ENCODE measurements at regions of chr3 and their contacts with region 1.

Region 1: GRCh38 chr3:193572426-193572908 is 17.8 kb upstream of the ATP13A4 start:
- DNase-seq: peak in 2 of 3 donors; percentile 35 to 68
- ATAC-seq: peak; percentile 92 to 96 (median 94)
- H3K4me3 ChIP-seq: no peak overlapping the region
- H3K27ac ChIP-seq: no peak overlapping the region
- H3K4me1 ChIP-seq: no peaks in the 10 kb centered on the region
- H3K27me3 ChIP-seq: no peaks in the 10 kb centered on the region
- CTCF ChIP-seq: peak; percentile 80 to 84 (median 80)
- POLR2A ChIP-seq: no peak

Region 2: DNA sequence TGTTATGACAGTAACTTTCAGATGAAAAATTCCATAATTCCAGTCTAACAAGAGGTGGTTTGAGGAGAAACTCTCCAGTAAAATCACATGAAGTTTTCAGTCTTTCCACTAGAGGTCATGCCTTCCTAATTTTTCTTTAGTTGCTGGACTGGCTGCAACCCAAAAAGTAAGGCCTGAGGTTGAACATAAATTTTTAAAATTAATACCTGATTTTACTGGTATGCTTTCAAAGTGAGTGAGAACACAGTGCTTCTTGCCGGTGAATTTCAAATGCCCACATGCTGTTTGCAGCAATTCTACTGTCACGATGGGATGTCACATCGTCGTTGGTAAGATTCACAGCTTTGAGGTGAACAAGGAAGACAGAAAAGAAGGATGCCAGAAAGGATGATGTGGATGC is 756.1 kb before region 1 on chr3:
- intact Hi-C with region 1: loop called in 1 of 2 experiments (anchors 10 kb)
- DNase-seq: no peak
- ATAC-seq: peak; percentile 64 to 72 (median 69)
- H3K4me3 ChIP-seq: no peak overlapping the region
- H3K27ac ChIP-seq: no peak overlapping the region
- H3K4me1 ChIP-seq: no peaks in the 10 kb centered on the region
- H3K27me3 ChIP-seq: no peaks in the 10 kb centered on the region
- CTCF ChIP-seq: peak; percentile 60 to 87 (median 68)
- POLR2A ChIP-seq: no peak

Region 3: DNA sequence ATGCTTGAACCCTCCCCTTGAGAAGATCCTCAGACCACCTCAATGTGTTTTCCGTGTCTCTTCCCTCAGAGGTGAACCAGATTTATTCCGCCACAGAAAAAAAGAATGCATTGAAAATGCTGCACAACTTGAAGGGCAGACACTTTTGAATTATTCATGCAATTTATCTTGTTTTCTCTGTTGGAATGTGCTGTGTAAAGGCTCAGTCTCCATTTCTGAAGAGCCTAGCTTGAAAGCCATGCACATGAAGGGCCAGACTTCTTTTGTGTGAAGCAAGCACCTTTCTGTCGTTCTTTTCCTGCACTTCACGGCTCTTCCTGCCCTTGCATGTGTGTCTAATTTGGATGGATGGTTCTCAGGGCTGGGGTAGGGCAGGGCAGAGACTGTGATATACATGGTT is 114.9 kb before region 1 on chr3:
- intact Hi-C with region 1: loop called (anchors 5 to 10 kb)
- DNase-seq: no peak
- ATAC-seq: no peak
- H3K4me3 ChIP-seq: no peak overlapping the region
- H3K27ac ChIP-seq: no peak overlapping the region
- H3K4me1 ChIP-seq: peaks cover 0 to 4% (median 0%) of the 10 kb centered on the region in 4 donors
- H3K27me3 ChIP-seq: peaks cover 0 to 3% of the 10 kb centered on the region in 2 donors
- CTCF ChIP-seq: no peak
- POLR2A ChIP-seq: no peak

Region 4: GRCh38 chr3:193465992-193466608 is 106.4 kb before region 1 on chr3:
- intact Hi-C with region 1: loop called in 1 of 2 experiments (anchors 10 kb)
- DNase-seq: no peak
- ATAC-seq: peak in 3 of 4 donors; percentile 33 to 61 (median 56)
- H3K4me3 ChIP-seq: no peak overlapping the region
- H3K27ac ChIP-seq: no peak overlapping the region
- H3K4me1 ChIP-seq: peaks cover 0 to 4% (median 0%) of the 10 kb centered on the region in 4 donors
- H3K27me3 ChIP-seq: peaks cover 0 to under 1% of the 10 kb centered on the region in 2 donors
- CTCF ChIP-seq: no peak
- POLR2A ChIP-seq: no peak

Region 5: DNA sequence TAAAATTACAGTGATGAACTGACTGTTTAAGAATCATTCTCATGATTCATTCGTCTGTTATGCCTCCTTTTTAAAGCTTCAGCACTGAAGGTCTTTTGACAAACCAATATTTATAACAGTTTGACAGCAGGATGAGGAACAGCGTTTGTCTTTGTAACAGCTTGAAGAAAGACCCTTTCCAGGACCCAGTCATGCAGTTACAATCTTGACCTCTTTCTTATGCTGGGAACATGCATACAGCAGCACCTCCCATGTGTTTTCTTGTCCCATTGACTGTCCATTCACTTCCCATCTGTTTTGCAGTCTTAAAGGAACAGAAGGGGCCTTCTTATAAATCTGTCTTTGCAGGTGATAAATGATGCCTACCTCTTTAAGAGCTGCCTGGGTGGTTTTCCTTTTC is 107.8 kb after region 1 on chr3:
- intact Hi-C with region 1: no loop called
- DNase-seq: no peak
- ATAC-seq: no peak
- H3K4me3 ChIP-seq: no peak overlapping the region
- H3K27ac ChIP-seq: no peak overlapping the region
- H3K4me1 ChIP-seq: no peaks in the 10 kb centered on the region
- H3K27me3 ChIP-seq: no peaks in the 10 kb centered on the region
- CTCF ChIP-seq: no peak
- POLR2A ChIP-seq: no peak

Measured in right lobe of liver (tissue), 6 donors.